Heart right ventricle (tissue), 16 donors: ENCODE measurements at regions of chr2 and their contacts with region 1.

Region 1: GRCh38 chr2:99559075-99559662 is 69.4 kb upstream of the REV1 start:
- DNase-seq: peak; percentile 86 to 89
- ATAC-seq: peak; percentile 93 to 96 (median 94)
- H3K4me3 ChIP-seq: no peak overlapping the region
- H3K27ac ChIP-seq: no peak overlapping the region
- H3K4me1 ChIP-seq: peaks cover 0 to 7% (median 0%) of the 10 kb centered on the region in 9 donors
- H3K27me3 ChIP-seq: no peaks in the 10 kb centered on the region
- CTCF ChIP-seq: peak; percentile 96 to 100 (median 99)

Region 2: DNA sequence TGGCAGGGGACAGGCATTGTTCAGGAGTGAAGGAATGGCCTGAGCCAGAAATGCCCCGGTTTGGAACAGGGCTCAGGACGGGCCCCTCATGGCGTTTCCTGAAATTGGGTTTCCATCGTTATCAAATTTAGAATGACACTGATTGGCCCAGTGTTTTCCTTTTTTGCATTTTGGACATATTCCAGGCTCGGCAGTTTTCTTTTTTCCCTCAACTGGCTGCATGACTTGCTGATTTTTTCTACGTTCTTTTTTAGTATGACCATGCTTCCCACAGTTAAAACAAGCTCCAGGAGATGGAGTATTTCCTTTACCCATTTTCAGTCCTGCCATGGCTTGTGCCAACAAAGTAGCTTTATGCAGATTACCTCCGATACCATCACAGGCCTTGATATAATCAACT is 283.3 kb before region 1 on chr2:
- intact Hi-C with region 1: no loop called
- DNase-seq: no peak
- ATAC-seq: no peak
- H3K4me3 ChIP-seq: no peak overlapping the region
- H3K27ac ChIP-seq: no peak overlapping the region
- H3K4me1 ChIP-seq: no peaks in the 10 kb centered on the region
- H3K27me3 ChIP-seq: no peaks in the 10 kb centered on the region
- CTCF ChIP-seq: no peak

Region 3: DNA sequence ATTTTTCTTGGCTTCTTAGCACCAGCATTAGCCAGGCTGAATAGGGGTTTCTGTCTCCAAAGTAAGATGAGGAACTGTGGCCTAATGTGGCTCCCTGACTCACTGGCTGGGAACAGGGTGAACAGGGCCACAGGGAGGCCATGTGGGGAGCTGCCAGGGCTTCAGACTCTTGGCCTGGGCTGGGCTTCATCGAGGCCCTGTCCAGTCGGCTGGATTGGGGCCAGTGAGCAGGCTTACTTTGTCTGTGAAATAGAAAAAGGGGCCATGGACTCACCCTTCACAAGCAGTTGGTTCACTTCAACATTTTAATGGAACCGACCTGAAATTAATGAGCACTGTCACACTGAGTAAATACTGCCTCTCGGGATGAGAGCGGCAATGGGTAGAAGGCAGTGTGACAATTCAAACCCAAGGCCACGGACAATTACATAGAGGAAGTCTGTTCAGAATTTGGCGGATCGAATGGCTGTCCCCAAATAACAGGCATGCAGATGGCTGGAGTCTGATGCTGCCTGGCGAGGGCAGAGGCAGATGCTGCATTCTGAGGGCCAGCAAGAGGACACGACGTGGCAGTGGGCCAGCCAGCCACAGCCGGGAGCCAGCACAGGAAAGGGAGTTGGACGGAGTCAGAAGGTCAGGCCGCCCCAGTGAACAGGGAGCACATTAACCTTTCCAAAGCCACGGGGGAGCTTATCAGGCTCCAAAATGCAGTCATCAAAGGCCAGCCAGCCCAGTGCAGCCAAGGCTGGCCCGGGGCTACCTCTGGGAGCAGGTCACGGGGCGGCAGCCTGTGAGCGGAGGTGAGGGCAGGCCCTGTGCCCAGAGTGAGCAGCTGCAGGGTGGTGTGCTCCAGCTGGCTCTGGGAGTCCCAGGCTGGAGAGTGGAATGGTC is 77.2 kb after region 1 on chr2:
- intact Hi-C with region 1: no loop called
- DNase-seq: peak; percentile 90 to 93
- ATAC-seq: peak; percentile 91 to 98 (median 95)
- H3K4me3 ChIP-seq: no peak overlapping the region
- H3K27ac ChIP-seq: peak overlapping the region; percentile 20 to 86 (median 73)
- H3K4me1 ChIP-seq: peaks cover 6 to 37% (median 24%) of the 10 kb centered on the region in 9 donors
- H3K27me3 ChIP-seq: no peaks in the 10 kb centered on the region
- CTCF ChIP-seq: peak in 1 of 9 donors; percentile 15

Region 4: GRCh38 chr2:99651930-99652670 is 92.9 kb after region 1 on chr2:
- intact Hi-C with region 1: no loop called
- DNase-seq: no peak
- ATAC-seq: no peak
- H3K4me3 ChIP-seq: no peak overlapping the region
- H3K27ac ChIP-seq: no peak overlapping the region
- H3K4me1 ChIP-seq: peaks cover 3 to 31% (median 18%) of the 10 kb centered on the region in 9 donors
- H3K27me3 ChIP-seq: no peaks in the 10 kb centered on the region
- CTCF ChIP-seq: no peak

Region 5: DNA sequence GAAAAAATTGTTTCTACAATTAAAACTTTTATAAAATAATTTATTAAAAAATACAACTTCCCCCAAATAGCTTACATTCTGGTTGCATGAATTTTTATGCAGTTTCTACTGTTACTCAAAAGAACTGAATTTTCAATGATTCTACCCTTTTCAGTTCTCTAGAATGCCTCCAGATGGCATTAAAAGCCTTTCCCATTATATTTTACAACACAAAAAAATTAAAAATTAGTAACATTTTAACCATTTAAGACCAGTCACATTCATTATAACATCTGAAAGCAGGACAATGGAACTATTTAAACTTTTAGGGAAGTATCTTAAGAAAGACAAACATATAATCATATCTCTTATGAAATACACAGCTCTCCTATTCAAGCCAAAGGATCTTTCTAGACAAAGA is 166.7 kb after region 1 on chr2:
- intact Hi-C with region 1: loop called in 1 of 10 experiments (anchors 10 kb)
- DNase-seq: no peak
- ATAC-seq: no peak
- H3K4me3 ChIP-seq: no peak overlapping the region
- H3K27ac ChIP-seq: no peak overlapping the region
- H3K4me1 ChIP-seq: peaks cover 0 to 40% (median 20%) of the 10 kb centered on the region in 9 donors
- H3K27me3 ChIP-seq: no peaks in the 10 kb centered on the region
- CTCF ChIP-seq: peak in 7 of 9 donors; percentile 19 to 58 (median 48)

Region 6: GRCh38 chr2:99811544-99811943 is 252.4 kb after region 1 on chr2:
- intact Hi-C with region 1: loop called in 7 of 10 experiments (anchors 5 to 10 kb)
- DNase-seq: no peak
- ATAC-seq: peak in 2 of 8 donors; percentile 28 to 29
- H3K4me3 ChIP-seq: no peak overlapping the region
- H3K27ac ChIP-seq: no peak overlapping the region
- H3K4me1 ChIP-seq: no peaks in the 10 kb centered on the region
- H3K27me3 ChIP-seq: no peaks in the 10 kb centered on the region
- CTCF ChIP-seq: no peak

Region 7: DNA sequence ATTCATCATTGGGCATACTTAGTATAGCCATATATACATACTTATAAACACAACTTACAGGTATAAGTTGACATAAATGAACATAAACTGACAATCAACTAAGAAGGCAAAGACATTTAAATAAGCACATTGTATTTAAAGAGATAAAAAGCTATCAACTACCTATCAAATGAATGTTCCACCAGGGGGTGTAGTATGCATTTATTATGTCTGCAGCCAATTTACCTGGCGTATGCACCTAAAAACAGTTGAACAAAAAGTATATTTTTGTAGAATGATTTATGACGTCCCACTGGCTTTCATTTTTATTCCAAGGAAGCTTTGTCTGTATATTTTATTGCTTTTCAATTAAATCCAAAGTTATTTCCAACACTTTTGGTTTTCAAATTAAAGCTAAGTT is 259.7 kb after region 1 on chr2:
- intact Hi-C with region 1: loop called in 8 of 10 experiments (anchors 2 to 10 kb)
- DNase-seq: no peak
- ATAC-seq: no peak
- H3K4me3 ChIP-seq: no peak overlapping the region
- H3K27ac ChIP-seq: no peak overlapping the region
- H3K4me1 ChIP-seq: peaks cover 0 to 5% (median 0%) of the 10 kb centered on the region in 9 donors
- H3K27me3 ChIP-seq: no peaks in the 10 kb centered on the region
- CTCF ChIP-seq: peak in 7 of 9 donors; percentile 8 to 43 (median 25)

Region 8: DNA sequence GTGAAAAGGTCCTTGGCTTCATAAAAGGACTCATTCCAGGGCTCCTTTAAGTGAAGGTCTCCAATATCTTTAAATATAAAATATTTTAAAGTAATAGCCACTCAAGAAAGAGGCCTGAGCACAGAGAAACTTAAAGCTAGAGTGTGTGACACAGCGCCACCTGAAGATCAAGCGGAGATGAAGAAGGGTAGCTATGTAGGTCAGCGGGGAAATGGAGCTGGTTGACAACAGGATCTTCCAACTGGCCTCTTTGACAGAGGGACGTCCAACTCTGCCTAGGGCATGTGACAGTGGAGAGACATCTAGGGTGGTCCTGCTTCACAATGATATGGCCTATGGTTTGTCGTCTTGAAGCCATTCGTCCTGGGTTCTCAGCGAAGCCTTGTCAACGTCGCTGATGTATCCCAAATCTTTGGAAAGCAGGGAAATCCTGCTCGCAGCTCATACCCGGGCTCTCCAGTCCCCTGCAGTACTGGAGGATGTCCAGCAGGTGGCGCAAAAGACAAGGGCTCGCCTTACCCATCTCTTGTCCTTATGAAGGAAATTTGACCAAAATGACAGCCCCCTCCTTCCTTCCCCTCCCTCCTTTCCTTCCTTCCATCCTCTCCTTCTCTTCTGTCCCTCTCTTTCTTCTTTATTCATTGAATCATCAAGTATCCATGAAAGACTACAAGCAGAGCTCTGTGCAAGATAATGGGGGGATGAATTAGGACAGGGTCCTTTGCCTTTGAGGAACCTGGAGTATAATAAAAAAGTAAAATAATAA is 703.6 kb after region 1 on chr2:
- intact Hi-C with region 1: loop called in 6 of 10 experiments (anchors 2 to 5 kb)
- DNase-seq: peak; percentile 65 to 67
- ATAC-seq: peak in 7 of 8 donors; percentile 56 to 80 (median 59)
- H3K4me3 ChIP-seq: no peak overlapping the region
- H3K27ac ChIP-seq: no peak overlapping the region
- H3K4me1 ChIP-seq: peaks cover 0 to 18% (median 0%) of the 10 kb centered on the region in 9 donors
- H3K27me3 ChIP-seq: peaks cover 0 to 9% (median 0%) of the 10 kb centered on the region in 7 donors
- CTCF ChIP-seq: peak; percentile 92 to 99 (median 98)

Region 9: GRCh38 chr2:100381240-100381639 is 822.1 kb after region 1 on chr2:
- intact Hi-C with region 1: loop called in 2 of 10 experiments (anchors 5 to 10 kb)
- DNase-seq: peak; percentile 36 to 79
- ATAC-seq: peak; percentile 38 to 78 (median 67)
- H3K4me3 ChIP-seq: no peak overlapping the region
- H3K27ac ChIP-seq: no peak overlapping the region
- H3K4me1 ChIP-seq: no peaks in the 10 kb centered on the region
- H3K27me3 ChIP-seq: no peaks in the 10 kb centered on the region
- CTCF ChIP-seq: peak; percentile 68 to 90 (median 86)